Activated CD8-positive, alpha-beta T cell treated with anti-CD3 and anti-CD28 coated beads for 36 hours (primary cell): ENCODE measurements at regions of chr1 and their contacts with region 1.

Region 1: GRCh38 chr1:235011599-235012435 is 116.8 kb downstream of the TOMM20 start:
- DNase-seq: peak; percentile 99
- ATAC-seq: peak; percentile 80
- H3K4me3 Mint-ChIP-seq: peak overlapping the region; percentile 51
- H3K27ac Mint-ChIP-seq: peak overlapping the region; percentile 95
- H3K4me1 Mint-ChIP-seq: peaks cover 84% of the 10 kb centered on the region
- H3K27me3 Mint-ChIP-seq: no peaks in the 10 kb centered on the region
- CTCF ChIP-seq: no peak

Region 2: GRCh38 chr1:234499119-234499942 is 512.5 kb before region 1 on chr1:
- CTCF ChIA-PET with region 1: interaction called, 5 read pairs
- POLR2A ChIA-PET with region 1: no interaction called
- intact Hi-C with region 1: loop called (anchors 10 kb)
- DNase-seq: peak; percentile 91
- ATAC-seq: peak; percentile 63
- H3K4me3 Mint-ChIP-seq: no peak overlapping the region
- H3K27ac Mint-ChIP-seq: peak overlapping the region; percentile 82
- H3K4me1 Mint-ChIP-seq: peaks cover 64% of the 10 kb centered on the region
- H3K27me3 Mint-ChIP-seq: peaks cover 6% of the 10 kb centered on the region
- CTCF ChIP-seq: peak; percentile 98

Region 3: GRCh38 chr1:234722904-234723720 is 288.7 kb before region 1 on chr1:
- CTCF ChIA-PET with region 1: no interaction called
- POLR2A ChIA-PET with region 1: interaction called, 13 read pairs
- intact Hi-C with region 1: no loop called
- DNase-seq: peak; percentile 89
- ATAC-seq: peak; percentile 63
- H3K4me3 Mint-ChIP-seq: peak overlapping the region; percentile 74
- H3K27ac Mint-ChIP-seq: peak overlapping the region; percentile 99
- H3K4me1 Mint-ChIP-seq: peaks cover 70% of the 10 kb centered on the region
- H3K27me3 Mint-ChIP-seq: no peaks in the 10 kb centered on the region
- CTCF ChIP-seq: no peak

Region 4: DNA sequence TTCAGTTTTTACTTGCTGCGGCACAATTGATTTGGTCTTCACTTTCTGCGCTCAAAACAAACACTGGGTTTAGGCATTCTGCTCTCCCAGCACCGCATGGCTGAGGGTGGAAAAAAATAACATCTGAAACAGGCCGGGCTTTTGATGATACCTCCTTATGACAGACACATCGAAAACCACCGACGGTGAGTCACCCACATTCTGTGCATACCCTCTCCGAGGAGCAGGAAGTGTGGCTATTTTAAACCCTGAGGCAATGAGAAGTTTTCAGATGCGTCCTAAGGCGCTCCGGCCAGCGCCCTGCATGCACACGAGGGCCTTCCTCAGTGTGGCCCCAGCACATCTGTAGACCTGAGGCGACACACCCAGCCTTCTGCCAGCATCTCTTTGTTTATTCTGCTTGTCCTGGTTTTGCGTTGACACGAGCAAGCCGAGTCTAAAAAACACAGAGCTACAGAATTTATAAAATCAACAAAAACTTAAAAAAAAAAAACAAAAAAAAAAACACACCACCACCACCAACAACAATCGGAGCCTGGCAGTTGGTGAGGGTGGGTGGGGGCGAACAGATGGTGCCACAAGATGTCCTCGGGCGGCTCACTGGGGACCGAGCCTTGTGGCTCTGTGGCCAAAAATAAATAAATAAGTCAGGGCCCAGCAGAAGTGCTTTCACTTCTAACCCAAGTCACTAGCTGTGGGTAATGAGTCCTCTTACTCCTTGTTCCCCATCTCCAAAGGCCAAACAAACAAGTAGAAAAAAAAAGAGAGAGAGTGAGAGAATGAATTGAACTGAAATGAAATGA is 239.3 kb before region 1 on chr1:
- CTCF ChIA-PET with region 1: no interaction called
- POLR2A ChIA-PET with region 1: interaction called, 3 read pairs
- intact Hi-C with region 1: loop called (anchors 2 kb)
- DNase-seq: peak; percentile 98
- ATAC-seq: peak; percentile 72
- H3K4me3 Mint-ChIP-seq: peak overlapping the region; percentile 57
- H3K27ac Mint-ChIP-seq: peak overlapping the region; percentile 93
- H3K4me1 Mint-ChIP-seq: peaks cover 60% of the 10 kb centered on the region
- H3K27me3 Mint-ChIP-seq: no peaks in the 10 kb centered on the region
- CTCF ChIP-seq: no peak

Region 5: GRCh38 chr1:234925440-234926263 is 86.2 kb before region 1 on chr1:
- CTCF ChIA-PET with region 1: no interaction called
- POLR2A ChIA-PET with region 1: interaction called, 12 read pairs
- intact Hi-C with region 1: no loop called
- DNase-seq: no peak
- ATAC-seq: peak; percentile 3
- H3K4me3 Mint-ChIP-seq: peak overlapping the region; percentile 48
- H3K27ac Mint-ChIP-seq: peak overlapping the region; percentile 95
- H3K4me1 Mint-ChIP-seq: peaks cover 51% of the 10 kb centered on the region
- H3K27me3 Mint-ChIP-seq: no peaks in the 10 kb centered on the region
- CTCF ChIP-seq: no peak

Region 6: GRCh38 chr1:234970731-234971476 is 40.9 kb before region 1 on chr1:
- CTCF ChIA-PET with region 1: interaction called, 4 read pairs
- POLR2A ChIA-PET with region 1: interaction called, 12 read pairs
- intact Hi-C with region 1: no loop called
- DNase-seq: peak; percentile 51
- ATAC-seq: peak; percentile 39
- H3K4me3 Mint-ChIP-seq: no peak overlapping the region
- H3K27ac Mint-ChIP-seq: peak overlapping the region; percentile 81
- H3K4me1 Mint-ChIP-seq: peaks cover 60% of the 10 kb centered on the region
- H3K27me3 Mint-ChIP-seq: no peaks in the 10 kb centered on the region
- CTCF ChIP-seq: no peak

Region 7: GRCh38 chr1:234987415-234988154 is 24.2 kb before region 1 on chr1:
- CTCF ChIA-PET with region 1: interaction called, 7 read pairs
- POLR2A ChIA-PET with region 1: interaction called, 18 read pairs
- intact Hi-C with region 1: no loop called
- DNase-seq: peak; percentile 65
- ATAC-seq: peak; percentile 49
- H3K4me3 Mint-ChIP-seq: no peak overlapping the region
- H3K27ac Mint-ChIP-seq: peak overlapping the region; percentile 91
- H3K4me1 Mint-ChIP-seq: peaks cover 75% of the 10 kb centered on the region
- H3K27me3 Mint-ChIP-seq: no peaks in the 10 kb centered on the region
- CTCF ChIP-seq: no peak

Region 8: GRCh38 chr1:235169986-235170385 is 158.2 kb after region 1 on chr1:
- CTCF ChIA-PET with region 1: no interaction called
- POLR2A ChIA-PET with region 1: no interaction called
- intact Hi-C with region 1: no loop called
- DNase-seq: no peak
- ATAC-seq: no peak
- H3K4me3 Mint-ChIP-seq: no peak overlapping the region
- H3K27ac Mint-ChIP-seq: no peak overlapping the region
- H3K4me1 Mint-ChIP-seq: no peaks in the 10 kb centered on the region
- H3K27me3 Mint-ChIP-seq: no peaks in the 10 kb centered on the region
- CTCF ChIP-seq: no peak